CD8-positive, alpha-beta T cell (primary cell): ENCODE measurements at regions of chr4 and their contacts with region 1.

Region 1: DNA sequence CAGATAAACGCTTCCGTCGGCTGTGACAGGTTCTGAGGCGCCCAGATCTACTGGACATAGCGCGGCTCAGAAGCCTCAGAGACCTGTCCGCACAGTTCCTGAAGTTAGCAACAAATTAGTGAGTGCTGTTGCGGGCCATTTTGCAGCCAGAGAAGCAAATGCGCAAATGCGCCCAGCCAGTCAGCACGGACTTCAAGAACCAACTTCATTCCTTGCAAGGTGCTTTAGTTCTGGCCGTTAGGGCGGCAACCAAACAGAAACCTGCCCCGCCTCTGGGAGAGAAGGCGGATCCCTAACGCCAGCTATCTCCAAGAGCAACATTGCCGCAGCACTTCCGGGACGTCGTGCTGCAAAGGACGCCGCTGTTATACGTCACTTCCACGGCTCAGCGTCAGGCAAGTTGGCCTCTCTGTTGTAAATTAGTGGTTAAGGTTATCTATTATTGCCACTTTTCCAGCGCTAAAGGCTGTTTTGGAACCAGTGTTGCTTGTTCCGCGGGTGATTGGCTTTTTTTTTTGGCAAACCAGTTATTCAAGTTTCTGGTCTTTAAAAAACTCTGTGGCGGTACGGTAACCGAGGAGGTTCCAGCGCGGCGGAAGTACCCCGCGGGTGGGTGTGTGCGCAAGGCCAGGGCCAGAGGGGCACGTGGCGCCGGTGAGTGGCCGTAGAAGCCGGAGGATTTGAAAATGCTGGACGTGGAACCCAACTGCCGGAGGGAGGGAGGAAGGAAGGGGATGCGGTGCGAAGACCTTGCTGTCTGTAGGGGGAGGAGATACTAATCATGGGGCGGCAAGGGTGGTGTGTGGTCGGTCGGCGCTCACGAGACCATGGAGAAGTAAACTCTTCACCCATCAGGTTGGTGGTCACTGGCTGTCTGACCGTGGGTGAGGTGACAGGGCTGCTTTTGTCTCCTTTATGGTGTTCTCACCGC is at the start of gene GAR1:
- DNase-seq: peak; percentile 67 to 95 (median 86)
- ATAC-seq: peak; percentile 92
- H3K4me3 ChIP-seq: peak within 1 kb of the TSS; percentile 85 to 87
- H3K4me3 Mint-ChIP-seq: peak within 1 kb of the TSS; percentile 99
- H3K27ac ChIP-seq: peak within 1 kb of the TSS; percentile 96 to 97
- H3K27ac Mint-ChIP-seq: peak within 1 kb of the TSS; percentile 99
- H3K4me1 ChIP-seq: peaks cover 16% of the 10 kb centered on the region
- H3K4me1 Mint-ChIP-seq: peaks cover 43% of the 10 kb centered on the region
- H3K27me3 ChIP-seq: no peaks in the 10 kb centered on the region
- H3K27me3 Mint-ChIP-seq: no peaks in the 10 kb centered on the region
- CTCF ChIP-seq: no peak
- total RNA-seq, gene GAR1: 11.8 to 15.4 TPM

Region 2: DNA sequence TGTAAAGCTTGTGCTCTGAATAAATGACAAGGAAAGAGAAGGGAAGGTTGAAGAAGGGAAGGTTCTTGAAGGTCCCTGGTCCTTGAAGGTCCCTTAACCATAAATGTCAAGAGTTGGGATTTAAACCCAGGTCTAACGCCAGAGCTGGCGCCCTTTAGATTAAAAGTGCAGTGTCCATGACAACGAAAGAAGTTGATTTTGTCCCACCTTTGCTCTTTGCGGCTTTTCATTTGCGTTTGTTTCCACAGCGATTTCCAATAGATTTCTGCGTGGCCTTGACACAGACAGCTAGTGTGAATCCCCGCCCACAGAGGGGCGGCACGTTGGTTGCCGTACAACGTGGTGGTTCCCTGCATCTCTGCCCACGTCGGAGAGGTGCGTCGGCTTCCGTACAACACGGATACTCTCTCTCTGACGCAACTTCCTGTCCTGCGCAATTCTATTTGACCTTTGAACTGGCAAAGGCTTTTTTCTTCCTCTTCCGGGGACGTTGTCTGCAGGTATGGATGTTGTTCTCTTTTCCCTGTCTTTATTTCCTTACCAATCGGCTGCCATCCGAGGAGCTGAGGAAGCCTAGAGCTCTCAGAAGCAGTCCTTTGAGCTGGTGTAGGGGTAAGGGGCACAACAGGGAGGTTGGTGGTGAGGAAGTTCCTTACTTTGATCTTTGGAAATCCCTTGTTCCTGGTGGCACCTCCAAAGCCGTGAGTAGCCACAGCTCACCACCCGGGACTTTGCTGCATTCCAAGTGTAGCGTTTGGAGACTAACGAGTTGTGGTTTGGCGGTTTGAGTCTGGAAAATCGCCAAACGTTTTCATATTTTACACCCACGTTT is 1195.1 kb before region 1 on chr4 and contains the start of gene RPL34:
- CTCF ChIA-PET with region 1: no interaction called
- POLR2A ChIA-PET with region 1: no interaction called
- intact Hi-C with region 1: loop called (anchors 1 to 2 kb)
- DNase-seq: peak; percentile 94 to 100 (median 97)
- ATAC-seq: peak; percentile 98
- H3K4me3 ChIP-seq: peak within 1 kb of the TSS; percentile 92 to 97
- H3K4me3 Mint-ChIP-seq: peak within 1 kb of the TSS; percentile 93
- H3K27ac ChIP-seq: peak within 1 kb of the TSS; percentile 85 to 90
- H3K27ac Mint-ChIP-seq: peak within 1 kb of the TSS; percentile 96
- H3K4me1 ChIP-seq: peaks cover 50% of the 10 kb centered on the region
- H3K4me1 Mint-ChIP-seq: peaks cover 58% of the 10 kb centered on the region
- H3K27me3 ChIP-seq: no peaks in the 10 kb centered on the region
- H3K27me3 Mint-ChIP-seq: no peaks in the 10 kb centered on the region
- CTCF ChIP-seq: no peak
- total RNA-seq, gene RPL34: 3,253 to 3,442 TPM

Region 3: DNA sequence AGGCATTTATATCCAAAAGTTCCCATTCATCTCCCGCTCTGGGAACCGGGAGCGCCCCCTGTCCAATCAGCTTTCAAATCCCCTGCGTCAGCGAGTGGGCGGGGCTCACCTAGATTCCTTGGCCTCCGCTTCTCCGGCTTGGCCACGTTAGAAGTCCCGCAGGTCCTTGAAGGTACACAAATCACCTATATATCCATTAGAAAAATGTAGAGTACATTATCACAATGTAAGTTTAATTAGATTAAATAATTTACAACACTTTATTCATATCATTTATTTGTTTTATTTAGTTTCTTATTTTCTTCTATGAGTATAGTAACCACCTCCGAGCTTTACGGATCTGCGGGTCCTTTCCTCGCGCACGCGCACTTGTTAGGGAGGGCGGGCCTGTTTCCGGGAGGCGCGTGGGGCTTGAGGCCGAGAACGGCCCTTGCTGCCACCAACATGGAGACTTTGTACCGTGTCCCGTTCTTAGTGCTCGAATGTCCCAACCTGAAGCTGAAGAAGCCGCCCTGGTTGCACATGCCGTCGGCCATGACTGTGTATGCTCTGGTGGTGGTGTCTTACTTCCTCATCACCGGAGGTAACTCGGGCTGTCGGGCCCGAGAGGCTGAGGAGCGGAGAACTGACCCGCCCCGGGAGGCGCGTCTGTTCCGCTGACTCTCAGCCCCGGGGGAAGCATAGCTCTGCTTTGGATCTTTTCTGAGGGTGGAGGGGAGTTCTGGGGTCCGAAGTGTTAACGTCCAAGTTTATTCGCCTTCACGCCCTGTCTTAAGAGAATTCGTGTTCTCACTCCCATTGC is 1165.0 kb before region 1 on chr4 and contains the start of gene OSTC:
- CTCF ChIA-PET with region 1: no interaction called
- POLR2A ChIA-PET with region 1: no interaction called
- intact Hi-C with region 1: loop called (anchors 1 to 10 kb)
- DNase-seq: peak; percentile 81 to 96 (median 93)
- ATAC-seq: peak; percentile 89
- H3K4me3 ChIP-seq: peak within 1 kb of the TSS; percentile 83 to 98
- H3K4me3 Mint-ChIP-seq: peak within 1 kb of the TSS; percentile 93
- H3K27ac ChIP-seq: peak within 1 kb of the TSS; percentile 93 to 94
- H3K27ac Mint-ChIP-seq: peak within 1 kb of the TSS; percentile 98
- H3K4me1 ChIP-seq: peaks cover 23% of the 10 kb centered on the region
- H3K4me1 Mint-ChIP-seq: peaks cover 40% of the 10 kb centered on the region
- H3K27me3 ChIP-seq: no peaks in the 10 kb centered on the region
- H3K27me3 Mint-ChIP-seq: no peaks in the 10 kb centered on the region
- CTCF ChIP-seq: no peak
- total RNA-seq, gene OSTC: 25.6 to 28.1 TPM

Region 4: GRCh38 chr4:108926061-108926460 is 889.4 kb before region 1 on chr4:
- CTCF ChIA-PET with region 1: no interaction called
- POLR2A ChIA-PET with region 1: no interaction called
- intact Hi-C with region 1: no loop called
- DNase-seq: no peak
- ATAC-seq: no peak
- H3K4me3 ChIP-seq: no peak overlapping the region
- H3K4me3 Mint-ChIP-seq: no peak overlapping the region
- H3K27ac ChIP-seq: no peak overlapping the region
- H3K27ac Mint-ChIP-seq: no peak overlapping the region
- H3K4me1 ChIP-seq: no peaks in the 10 kb centered on the region
- H3K4me1 Mint-ChIP-seq: no peaks in the 10 kb centered on the region
- H3K27me3 ChIP-seq: no peaks in the 10 kb centered on the region
- H3K27me3 Mint-ChIP-seq: peaks cover 2% of the 10 kb centered on the region
- CTCF ChIP-seq: no peak

Region 5: GRCh38 chr4:109134921-109135320 is 680.5 kb before region 1 on chr4:
- CTCF ChIA-PET with region 1: no interaction called
- POLR2A ChIA-PET with region 1: no interaction called
- intact Hi-C with region 1: no loop called
- DNase-seq: no peak
- ATAC-seq: no peak
- H3K4me3 ChIP-seq: no peak overlapping the region
- H3K4me3 Mint-ChIP-seq: no peak overlapping the region
- H3K27ac ChIP-seq: no peak overlapping the region
- H3K27ac Mint-ChIP-seq: no peak overlapping the region
- H3K4me1 ChIP-seq: no peaks in the 10 kb centered on the region
- H3K4me1 Mint-ChIP-seq: no peaks in the 10 kb centered on the region
- H3K27me3 ChIP-seq: no peaks in the 10 kb centered on the region
- H3K27me3 Mint-ChIP-seq: no peaks in the 10 kb centered on the region
- CTCF ChIP-seq: no peak

Region 6: GRCh38 chr4:109574102-109574850 is 241.1 kb before region 1 on chr4:
- CTCF ChIA-PET with region 1: no interaction called
- POLR2A ChIA-PET with region 1: no interaction called
- intact Hi-C with region 1: no loop called
- DNase-seq: peak in 2 of 9 experiments; percentile 36 to 52
- ATAC-seq: peak; percentile 64
- H3K4me3 ChIP-seq: no peak overlapping the region
- H3K4me3 Mint-ChIP-seq: peak overlapping the region; percentile 37
- H3K27ac ChIP-seq: no peak overlapping the region
- H3K27ac Mint-ChIP-seq: peak overlapping the region; percentile 67
- H3K4me1 ChIP-seq: peaks cover 45% of the 10 kb centered on the region
- H3K4me1 Mint-ChIP-seq: peaks cover 74% of the 10 kb centered on the region
- H3K27me3 ChIP-seq: no peaks in the 10 kb centered on the region
- H3K27me3 Mint-ChIP-seq: no peaks in the 10 kb centered on the region
- CTCF ChIP-seq: peak; percentile 18

Region 7: DNA sequence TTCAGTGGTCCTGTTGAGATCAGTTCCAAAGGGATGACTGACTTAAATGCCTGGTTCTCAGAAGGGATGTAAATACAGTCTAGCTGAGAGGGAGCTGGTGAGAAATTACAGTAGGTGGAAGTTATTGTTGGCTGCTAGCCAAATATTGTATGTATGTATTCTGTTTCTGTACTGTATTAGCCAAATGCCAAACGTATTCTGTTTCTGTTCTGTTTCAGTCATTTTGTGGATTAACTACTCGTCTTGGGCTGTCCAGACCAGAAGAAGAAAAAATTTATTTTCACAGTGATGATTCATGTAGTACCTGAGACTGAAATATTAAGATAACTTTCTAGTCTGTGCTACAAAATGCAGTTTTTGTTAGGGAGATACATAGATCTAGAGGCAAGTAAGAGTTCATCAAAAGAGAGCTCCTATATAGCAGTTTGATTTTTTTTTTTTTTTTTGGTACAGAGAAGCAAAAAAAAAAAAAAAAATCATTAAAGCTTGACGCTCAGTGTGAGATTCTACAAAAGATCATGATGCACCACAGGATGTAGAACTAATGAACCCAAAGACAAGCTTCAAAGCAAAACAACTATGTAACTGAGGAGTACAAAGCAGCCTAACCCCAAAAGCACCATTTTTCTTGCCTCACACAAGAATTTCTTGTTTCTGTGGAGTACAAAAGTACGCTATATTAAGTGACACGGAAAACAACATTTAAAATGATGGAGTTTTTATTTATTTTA is 167.0 kb before region 1 on chr4:
- CTCF ChIA-PET with region 1: no interaction called
- POLR2A ChIA-PET with region 1: no interaction called
- intact Hi-C with region 1: no loop called
- DNase-seq: peak in 4 of 9 experiments; percentile 23 to 87 (median 56)
- ATAC-seq: peak; percentile 85
- H3K4me3 ChIP-seq: peak overlapping the region in 1 of 2 experiments; percentile 29
- H3K4me3 Mint-ChIP-seq: peak overlapping the region; percentile 76
- H3K27ac ChIP-seq: peak overlapping the region; percentile 45 to 61
- H3K27ac Mint-ChIP-seq: peak overlapping the region; percentile 92
- H3K4me1 ChIP-seq: peaks cover 73% of the 10 kb centered on the region
- H3K4me1 Mint-ChIP-seq: peaks cover 41% of the 10 kb centered on the region
- H3K27me3 ChIP-seq: no peaks in the 10 kb centered on the region
- H3K27me3 Mint-ChIP-seq: no peaks in the 10 kb centered on the region
- CTCF ChIP-seq: no peak

Region 8: GRCh38 chr4:109702950-109703663 is 112.3 kb before region 1 on chr4 and contains the start of gene CASP6:
- CTCF ChIA-PET with region 1: no interaction called
- POLR2A ChIA-PET with region 1: no interaction called
- intact Hi-C with region 1: loop called (anchors 2 kb)
- DNase-seq: peak; percentile 52 to 87 (median 77)
- ATAC-seq: peak; percentile 89
- H3K4me3 ChIP-seq: peak within 1 kb of the TSS; percentile 72 to 85
- H3K4me3 Mint-ChIP-seq: peak within 1 kb of the TSS; percentile 94
- H3K27ac ChIP-seq: peak within 1 kb of the TSS; percentile 48 to 66
- H3K27ac Mint-ChIP-seq: peak within 1 kb of the TSS; percentile 94
- H3K4me1 ChIP-seq: peaks cover 15% of the 10 kb centered on the region
- H3K4me1 Mint-ChIP-seq: peaks cover 38% of the 10 kb centered on the region
- H3K27me3 ChIP-seq: no peaks in the 10 kb centered on the region
- H3K27me3 Mint-ChIP-seq: no peaks in the 10 kb centered on the region
- CTCF ChIP-seq: peak; percentile 67
- total RNA-seq, gene CASP6: 3.4 to 6.7 TPM

Region 9: DNA sequence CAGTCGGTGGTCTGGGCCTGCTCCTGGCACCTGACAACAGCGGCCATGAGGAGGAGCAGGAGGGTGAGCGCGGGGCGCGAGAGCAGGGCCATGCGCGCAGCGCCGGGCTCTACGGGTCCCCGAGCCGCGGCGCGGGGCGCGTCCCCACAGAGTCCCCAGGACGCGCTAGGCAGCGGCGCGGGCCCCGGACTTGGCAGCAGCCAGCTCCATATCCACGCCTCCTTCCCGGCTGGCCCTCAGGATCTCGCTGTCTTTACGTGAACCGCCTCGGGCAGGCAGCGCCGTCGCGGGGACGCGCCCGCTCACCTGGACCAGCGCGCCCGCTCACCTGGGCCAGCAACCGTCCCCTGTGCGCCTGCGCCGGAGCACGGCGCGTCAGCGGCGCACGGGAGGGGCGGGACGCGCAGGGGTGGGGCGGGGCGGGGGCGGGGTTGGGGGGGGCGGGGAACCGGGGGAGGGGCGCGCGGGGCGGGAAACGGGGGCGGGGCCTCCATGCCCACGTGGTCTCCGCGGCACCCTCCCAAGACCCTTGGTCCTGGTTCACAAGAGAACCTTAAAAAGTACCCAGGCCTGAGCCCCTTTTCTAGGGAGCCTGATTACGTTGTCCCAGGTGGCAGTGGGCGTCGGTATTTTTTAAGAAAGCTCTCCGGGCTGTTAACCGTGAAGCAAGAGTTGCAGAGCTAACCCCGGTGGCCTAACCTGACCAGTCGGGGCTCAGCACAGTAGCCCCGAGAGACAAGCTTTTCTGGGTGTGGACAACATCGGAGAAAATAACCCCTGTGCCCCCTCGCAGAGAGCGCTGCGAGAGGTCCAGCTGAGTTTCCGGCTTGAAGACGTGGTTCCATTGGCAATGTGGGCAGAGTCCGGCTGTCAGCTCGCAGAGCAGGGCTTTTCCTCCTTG is 85.4 kb before region 1 on chr4 and contains the start of gene PLA2G12A:
- CTCF ChIA-PET with region 1: no interaction called
- POLR2A ChIA-PET with region 1: no interaction called
- intact Hi-C with region 1: loop called (anchors 1 kb)
- DNase-seq: peak; percentile 65 to 91 (median 81)
- ATAC-seq: peak; percentile 93
- H3K4me3 ChIP-seq: peak within 1 kb of the TSS; percentile 89 to 92
- H3K4me3 Mint-ChIP-seq: peak within 1 kb of the TSS; percentile 90
- H3K27ac ChIP-seq: peak within 1 kb of the TSS; percentile 69 to 78
- H3K27ac Mint-ChIP-seq: peak within 1 kb of the TSS; percentile 90
- H3K4me1 ChIP-seq: peaks cover 17% of the 10 kb centered on the region
- H3K4me1 Mint-ChIP-seq: peaks cover 27% of the 10 kb centered on the region
- H3K27me3 ChIP-seq: no peaks in the 10 kb centered on the region
- H3K27me3 Mint-ChIP-seq: no peaks in the 10 kb centered on the region
- CTCF ChIP-seq: no peak
- total RNA-seq, gene PLA2G12A: 7.8 to 10.2 TPM

Region 10: DNA sequence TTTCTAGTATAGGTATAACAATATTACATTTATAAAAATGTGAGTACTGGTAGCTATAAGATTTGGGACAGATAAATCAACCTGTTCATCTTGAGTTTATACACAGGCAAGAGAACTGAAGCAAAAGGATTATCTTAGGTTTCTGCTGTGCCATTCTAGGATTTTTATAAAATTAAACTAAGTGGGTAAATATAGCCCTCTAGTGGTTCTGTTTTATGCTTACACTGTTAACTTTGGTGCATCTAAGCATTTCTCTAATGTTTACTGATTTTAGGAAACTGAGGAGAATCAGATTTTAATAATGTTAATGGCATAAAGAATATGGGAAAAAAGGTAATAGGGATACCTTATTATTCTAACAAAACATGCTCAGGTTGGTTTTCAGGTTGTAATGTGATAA is 11.3 kb after region 1 on chr4:
- CTCF ChIA-PET with region 1: interaction called, 10 read pairs
- POLR2A ChIA-PET with region 1: interaction called, 4 read pairs
- intact Hi-C with region 1: no loop called
- DNase-seq: peak in 2 of 9 experiments; percentile 24 to 46
- ATAC-seq: peak; percentile 65
- H3K4me3 ChIP-seq: no peak overlapping the region
- H3K4me3 Mint-ChIP-seq: no peak overlapping the region
- H3K27ac ChIP-seq: no peak overlapping the region
- H3K27ac Mint-ChIP-seq: no peak overlapping the region
- H3K4me1 ChIP-seq: no peaks in the 10 kb centered on the region
- H3K4me1 Mint-ChIP-seq: peaks cover 2% of the 10 kb centered on the region
- H3K27me3 ChIP-seq: no peaks in the 10 kb centered on the region
- H3K27me3 Mint-ChIP-seq: no peaks in the 10 kb centered on the region
- CTCF ChIP-seq: peak; percentile 84